Activated T-helper 1 cell treated with anti-CD3 and anti-CD28 coated beads, Interleukin-12 subunit alpha, Interleukin-12 subunit beta, Interleukin-2, Interleukin-4 antibody, amounts not matched to agents 30 ng/mL and 10 ng/mL and 1 ng/mL, durations not matched to agents 14 hours and 24 hours and 36 hours (primary cell): ENCODE measurements at regions of chr2 and their contacts with region 1.

Region 1: DNA sequence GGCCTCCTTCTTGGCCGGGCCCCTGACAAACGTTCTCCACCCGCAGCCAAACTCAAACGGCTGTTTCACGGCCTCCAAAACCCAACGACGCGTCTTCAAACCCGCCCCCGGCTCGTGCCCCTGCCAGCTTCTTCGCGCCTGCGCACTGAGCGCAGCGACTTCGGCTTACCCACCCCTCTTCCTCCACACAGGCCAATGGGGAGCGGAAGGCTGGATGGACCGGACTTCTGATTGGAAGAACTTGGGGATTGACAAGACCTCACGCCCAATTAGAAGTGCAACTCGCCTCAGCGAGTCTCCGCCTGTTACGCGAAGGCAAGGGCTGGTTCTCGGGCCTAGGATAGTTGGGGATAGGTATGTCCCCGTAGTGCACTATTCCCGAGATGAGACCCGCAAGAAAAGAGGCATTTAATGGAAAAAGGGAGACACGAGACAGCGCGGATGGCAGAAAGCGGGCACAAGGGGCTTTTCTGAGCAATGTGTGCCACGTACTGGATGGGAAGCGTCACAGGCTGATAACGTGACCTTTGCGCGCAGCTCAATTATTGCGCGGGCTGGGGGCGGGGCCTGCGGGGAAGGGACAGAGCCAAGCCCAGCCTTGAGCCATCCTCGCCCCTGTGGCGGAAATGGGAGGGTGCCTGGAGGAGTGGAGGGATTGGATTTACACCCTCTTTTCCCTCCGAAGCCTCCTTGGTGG is at the start of gene LAPTM4A:
- DNase-seq: peak; percentile 97
- H3K4me3 Mint-ChIP-seq: no peak within 1 kb of the TSS
- H3K27ac Mint-ChIP-seq: no peak within 1 kb of the TSS
- H3K4me1 Mint-ChIP-seq: peaks cover 26% of the 10 kb centered on the region
- H3K27me3 Mint-ChIP-seq: peaks cover 14% of the 10 kb centered on the region
- total RNA-seq, gene LAPTM4A: 25.5 and 29.1 TPM in 2 replicates

Region 2: GRCh38 chr2:19362755-19363473 is 688.8 kb before region 1 on chr2:
- intact Hi-C with region 1: loop called (anchors 5 kb)
- DNase-seq: no peak
- H3K4me3 Mint-ChIP-seq: peak overlapping the region; percentile 90
- H3K27ac Mint-ChIP-seq: no peak overlapping the region
- H3K4me1 Mint-ChIP-seq: peaks cover 24% of the 10 kb centered on the region
- H3K27me3 Mint-ChIP-seq: peaks cover 94% of the 10 kb centered on the region

Region 3: DNA sequence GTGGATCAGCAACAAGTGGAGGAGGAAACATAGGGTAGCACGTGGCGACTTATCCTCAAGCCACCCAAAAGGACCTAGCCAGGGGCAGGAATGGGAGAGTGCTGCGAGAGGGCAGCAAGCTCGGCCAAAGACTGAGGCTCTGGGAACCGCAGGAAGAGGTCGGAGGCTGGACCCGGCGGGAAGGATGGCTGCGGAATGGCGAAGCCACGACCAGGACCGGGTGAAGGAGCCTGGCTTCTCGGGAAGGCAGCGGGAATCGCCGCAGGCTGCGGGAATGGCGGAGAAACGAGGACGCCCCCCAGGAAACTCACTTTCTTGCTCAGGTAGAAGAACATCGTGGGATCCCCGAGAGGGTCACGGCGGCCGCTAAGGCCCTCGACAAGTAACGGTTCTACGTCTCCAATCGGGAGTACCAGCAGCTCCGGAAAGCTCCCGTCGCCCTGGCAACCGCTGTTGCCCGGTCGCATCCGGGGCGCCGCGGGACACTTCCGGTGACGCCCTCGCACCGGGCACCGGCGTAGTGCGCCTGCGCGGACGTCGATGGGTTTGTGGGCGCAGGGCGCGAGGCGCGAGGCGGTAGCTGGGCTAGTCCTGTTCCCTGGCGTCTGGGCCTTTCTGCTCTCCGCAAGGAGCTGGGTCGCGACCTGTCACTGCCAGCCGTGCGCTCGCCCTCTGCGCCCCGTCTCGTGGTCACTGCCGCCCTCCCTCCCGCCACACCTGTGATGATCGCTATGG is 61.8 kb before region 1 on chr2 and contains the start of gene WDR35:
- intact Hi-C with region 1: loop called (anchors 1 kb)
- DNase-seq: peak; percentile 92
- H3K4me3 Mint-ChIP-seq: peak within 1 kb of the TSS; percentile 90
- H3K27ac Mint-ChIP-seq: peak within 1 kb of the TSS; percentile 69
- H3K4me1 Mint-ChIP-seq: peaks cover 19% of the 10 kb centered on the region
- H3K27me3 Mint-ChIP-seq: peaks cover 30% of the 10 kb centered on the region
- total RNA-seq, gene WDR35: 7.7 and 7.8 TPM in 2 replicates

Region 4: GRCh38 chr2:20071397-20072383 is 20.0 kb after region 1 on chr2:
- intact Hi-C with region 1: no loop called
- DNase-seq: no peak
- H3K4me3 Mint-ChIP-seq: no peak overlapping the region
- H3K27ac Mint-ChIP-seq: no peak overlapping the region
- H3K4me1 Mint-ChIP-seq: no peaks in the 10 kb centered on the region
- H3K27me3 Mint-ChIP-seq: peaks cover 13% of the 10 kb centered on the region

Region 5: GRCh38 chr2:20097879-20098714 is 46.4 kb after region 1 on chr2:
- intact Hi-C with region 1: loop called (anchors 1 kb)
- DNase-seq: peak; percentile 45
- H3K4me3 Mint-ChIP-seq: no peak overlapping the region
- H3K27ac Mint-ChIP-seq: no peak overlapping the region
- H3K4me1 Mint-ChIP-seq: no peaks in the 10 kb centered on the region
- H3K27me3 Mint-ChIP-seq: peaks cover 17% of the 10 kb centered on the region

Region 6: DNA sequence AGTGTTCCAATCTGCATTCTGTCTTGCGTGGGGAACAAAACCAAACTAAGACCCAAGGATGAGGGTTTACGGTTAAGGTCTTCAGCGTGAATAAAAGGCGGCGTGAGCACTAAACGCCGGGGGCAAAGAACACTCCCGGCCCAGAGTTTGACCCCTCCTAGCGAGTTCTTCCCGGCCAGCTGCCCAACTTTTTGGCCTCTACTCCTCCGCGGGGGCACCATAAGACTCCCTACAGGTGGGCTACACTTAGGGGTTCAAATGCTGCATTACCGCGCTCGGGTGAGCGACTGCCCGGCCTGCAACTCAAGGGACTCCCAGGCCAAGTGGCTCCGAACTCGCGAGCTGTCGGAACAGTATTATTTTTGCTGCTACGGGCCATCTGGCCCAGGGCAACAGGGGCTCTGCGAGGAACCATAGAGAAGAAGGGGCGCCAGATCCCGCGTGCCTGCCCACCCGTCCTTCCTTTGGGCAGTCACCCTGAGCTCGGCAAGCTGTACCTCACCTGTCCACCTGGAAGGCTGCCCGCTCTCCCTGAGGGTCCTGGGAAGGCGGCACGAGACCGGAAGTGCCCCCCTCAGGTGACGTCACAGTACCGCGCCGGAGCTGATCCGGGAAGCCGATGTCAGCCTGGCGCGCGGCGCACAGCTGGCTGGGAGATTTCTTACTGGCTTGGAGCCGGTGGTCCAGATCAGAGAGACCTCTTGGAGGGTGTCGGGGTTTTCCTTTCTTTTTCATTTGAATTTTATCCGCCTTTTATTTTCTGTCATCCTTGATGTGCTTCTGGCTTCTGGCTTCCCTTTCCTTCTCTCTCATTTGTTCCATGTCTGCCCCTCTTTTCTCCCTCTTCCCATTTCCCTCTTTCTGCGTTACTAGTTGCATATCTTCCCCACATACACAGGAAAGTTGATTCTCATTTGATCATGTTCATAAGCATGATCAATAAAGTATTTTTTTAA is 771.1 kb after region 1 on chr2 and contains the start of gene LDAH:
- intact Hi-C with region 1: loop called (anchors 2 kb)
- DNase-seq: peak; percentile 74
- H3K4me3 Mint-ChIP-seq: peak within 1 kb of the TSS; percentile 98
- H3K27ac Mint-ChIP-seq: peak within 1 kb of the TSS; percentile 98
- H3K4me1 Mint-ChIP-seq: peaks cover 28% of the 10 kb centered on the region
- H3K27me3 Mint-ChIP-seq: no peaks in the 10 kb centered on the region
- total RNA-seq, gene LDAH: 34.6 and 34.7 TPM in 2 replicates